ENCODE measurements at regions of chr12 and their contacts with region 1.

Region 1: DNA sequence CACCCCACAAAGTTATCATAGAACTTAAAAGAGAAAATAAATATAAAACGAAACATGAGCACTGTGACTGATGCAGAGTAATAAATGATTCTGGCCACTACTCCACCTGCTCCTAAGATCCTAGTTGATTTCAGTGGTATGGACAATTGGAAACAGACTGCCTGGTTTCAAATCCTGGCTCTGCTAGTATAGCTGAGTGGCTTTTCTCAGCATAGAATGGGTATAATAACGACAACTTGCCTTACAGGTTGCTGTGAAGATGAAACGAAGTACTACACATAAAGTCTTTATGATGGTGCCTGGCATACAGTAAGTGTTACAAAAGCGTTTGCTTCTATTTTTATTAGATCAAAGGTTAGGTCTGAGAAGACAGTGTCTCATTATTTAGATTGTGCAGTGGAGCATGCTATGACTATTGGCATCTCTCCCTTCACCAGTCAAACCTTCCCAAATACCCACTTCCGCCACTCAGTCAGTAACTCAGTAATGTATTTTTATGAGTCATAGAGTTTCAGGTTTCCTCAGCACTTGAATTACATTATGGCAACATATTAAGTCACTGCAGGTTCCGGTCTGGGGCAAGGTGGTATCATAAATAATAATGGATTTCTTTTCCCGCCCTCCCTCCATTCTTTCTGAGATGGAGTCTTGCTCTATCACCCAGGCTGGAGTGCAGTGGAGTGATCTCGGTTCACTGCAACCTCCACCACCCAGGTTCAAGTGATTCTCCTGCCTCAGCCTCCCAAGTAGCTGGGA is 29.7 kb upstream of the NR2C1 start:
- DNase-seq: peak; percentile 70
- H3K4me3 Mint-ChIP-seq: no peak overlapping the region
- H3K27ac Mint-ChIP-seq: no peak overlapping the region
- H3K4me1 Mint-ChIP-seq: peaks cover 10% of the 10 kb centered on the region
- H3K27me3 Mint-ChIP-seq: no peaks in the 10 kb centered on the region

Region 2: DNA sequence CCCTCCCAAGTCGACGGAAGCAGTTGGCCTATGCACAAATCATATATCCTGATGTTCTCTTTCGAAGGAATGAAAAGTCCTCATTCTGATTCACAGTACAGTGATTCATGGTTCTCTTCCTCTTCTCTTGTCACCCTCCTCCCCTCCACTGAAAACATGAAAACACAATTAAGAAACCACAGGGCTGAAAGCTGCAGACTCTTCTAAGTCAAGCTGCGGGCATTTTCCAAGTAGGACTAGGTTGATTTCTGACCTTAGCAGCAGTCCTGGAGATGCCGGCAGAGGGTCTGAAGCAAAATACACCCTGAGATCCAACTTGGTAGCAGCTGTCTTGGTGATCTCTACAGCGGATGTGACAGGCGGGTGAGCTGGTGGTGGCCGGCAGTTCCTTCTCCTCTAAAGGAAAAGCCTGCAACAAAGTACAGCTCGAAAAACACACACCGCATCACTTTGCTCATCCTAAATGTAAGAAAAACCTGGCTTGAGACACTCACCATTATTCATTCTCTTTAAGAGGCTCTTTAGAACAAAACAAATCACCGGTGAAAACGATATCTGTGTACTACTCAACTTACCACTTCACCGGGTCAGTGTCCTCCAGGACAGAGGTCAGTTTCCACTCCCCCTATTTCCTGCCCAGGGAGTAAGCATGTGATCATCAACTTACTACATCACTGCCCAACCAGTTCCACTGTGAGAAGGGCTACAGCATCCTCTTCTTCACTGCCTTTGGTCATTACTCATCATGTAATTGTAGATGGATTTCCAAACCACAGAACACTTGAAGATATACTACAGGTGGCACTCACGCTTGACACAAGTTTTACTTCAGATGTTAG is 458.7 kb before region 1 on chr12:
- CTCF ChIA-PET with region 1: no interaction called
- intact Hi-C with region 1: loop called (anchors 2 kb)
- DNase-seq: peak; percentile 18
- H3K4me3 Mint-ChIP-seq: peak overlapping the region; percentile 8
- H3K27ac Mint-ChIP-seq: no peak overlapping the region
- H3K4me1 Mint-ChIP-seq: peaks cover 27% of the 10 kb centered on the region
- H3K27me3 Mint-ChIP-seq: peaks cover 50% of the 10 kb centered on the region

Region 3: DNA sequence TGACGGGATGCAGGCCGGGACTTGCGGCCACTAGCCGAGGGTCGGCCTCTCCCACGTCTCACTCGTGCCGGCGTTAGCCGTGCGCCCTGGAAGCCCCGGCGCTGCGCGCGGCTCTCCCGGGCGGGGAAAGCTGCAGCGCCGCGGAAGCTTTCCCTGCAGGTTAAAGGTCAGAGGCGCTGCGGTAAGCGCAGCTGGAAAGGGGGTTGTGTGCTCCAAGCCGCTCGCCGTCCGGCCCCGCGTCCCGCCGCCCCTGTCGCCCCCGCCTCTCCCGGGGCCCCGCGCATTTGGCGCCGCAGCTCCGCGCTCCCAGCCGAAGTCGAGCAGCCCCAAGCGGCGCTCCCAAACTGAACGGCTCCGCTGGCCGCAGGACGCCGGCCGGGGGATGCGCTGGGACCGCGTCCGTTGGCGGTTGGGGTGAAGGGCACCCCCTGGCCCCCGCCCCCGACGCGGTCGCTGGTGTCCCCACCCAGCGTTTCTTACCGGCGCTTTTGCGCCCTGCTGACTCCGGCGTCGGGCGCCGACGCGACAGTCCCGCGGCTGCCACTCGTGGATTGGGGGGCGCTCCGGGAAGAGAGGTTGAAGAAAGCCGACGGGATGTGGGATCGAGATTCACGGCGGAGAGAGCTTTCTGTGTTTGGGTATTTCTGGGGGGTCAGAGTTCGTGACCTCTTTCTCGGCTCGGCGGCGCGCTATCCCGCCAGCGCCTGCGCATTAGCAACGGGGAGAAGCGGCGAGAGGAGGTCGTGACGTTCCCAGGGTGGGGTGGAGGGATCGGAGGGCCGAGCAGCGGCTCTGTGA is 30.0 kb before region 1 on chr12 and contains the start of gene NR2C1:
- CTCF ChIA-PET with region 1: interaction called, 3 read pairs
- intact Hi-C with region 1: loop called (anchors 1 kb)
- DNase-seq: peak; percentile 95
- H3K4me3 Mint-ChIP-seq: peak within 1 kb of the TSS; percentile 92
- H3K27ac Mint-ChIP-seq: peak within 1 kb of the TSS; percentile 63
- H3K4me1 Mint-ChIP-seq: peaks cover 19% of the 10 kb centered on the region
- H3K27me3 Mint-ChIP-seq: no peaks in the 10 kb centered on the region
- total RNA-seq, gene NR2C1: 19.8 to 24.6 TPM

Region 4: DNA sequence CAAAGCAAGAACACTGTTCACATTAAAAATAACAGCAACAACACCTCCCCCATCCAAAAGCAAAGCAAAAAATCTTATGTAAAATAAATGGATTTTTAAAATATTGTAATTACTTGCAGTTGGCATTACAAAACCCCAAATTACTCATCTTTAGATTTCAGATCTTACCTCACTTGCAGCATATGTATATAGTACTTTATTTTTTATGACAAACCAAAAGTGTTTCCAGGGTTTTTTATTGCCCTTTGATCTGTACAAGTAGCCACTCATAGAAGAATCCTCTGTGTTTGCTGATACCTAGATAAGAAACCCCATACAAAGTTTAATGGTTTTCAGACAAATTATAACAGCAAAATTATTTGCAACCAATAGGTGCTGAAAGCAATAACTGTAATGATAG is 17.5 kb before region 1 on chr12:
- CTCF ChIA-PET with region 1: no interaction called
- intact Hi-C with region 1: loop called (anchors 1 kb)
- DNase-seq: no peak
- H3K4me3 Mint-ChIP-seq: no peak overlapping the region
- H3K27ac Mint-ChIP-seq: no peak overlapping the region
- H3K4me1 Mint-ChIP-seq: peaks cover 2% of the 10 kb centered on the region
- H3K27me3 Mint-ChIP-seq: no peaks in the 10 kb centered on the region

Region 5: GRCh38 chr12:95117178-95117599 is 14.1 kb after region 1 on chr12:
- CTCF ChIA-PET with region 1: interaction called, 3 read pairs
- intact Hi-C with region 1: loop called (anchors 1 kb)
- DNase-seq: peak; percentile 83
- H3K4me3 Mint-ChIP-seq: no peak overlapping the region
- H3K27ac Mint-ChIP-seq: no peak overlapping the region
- H3K4me1 Mint-ChIP-seq: peaks cover 2% of the 10 kb centered on the region
- H3K27me3 Mint-ChIP-seq: no peaks in the 10 kb centered on the region

Region 6: GRCh38 chr12:95304673-95305198 is 201.6 kb after region 1 on chr12:
- CTCF ChIA-PET with region 1: no interaction called
- intact Hi-C with region 1: loop called (anchors 1 kb)
- DNase-seq: no peak
- H3K4me3 Mint-ChIP-seq: no peak overlapping the region
- H3K27ac Mint-ChIP-seq: no peak overlapping the region
- H3K4me1 Mint-ChIP-seq: peaks cover 13% of the 10 kb centered on the region
- H3K27me3 Mint-ChIP-seq: no peaks in the 10 kb centered on the region

Region 7: DNA sequence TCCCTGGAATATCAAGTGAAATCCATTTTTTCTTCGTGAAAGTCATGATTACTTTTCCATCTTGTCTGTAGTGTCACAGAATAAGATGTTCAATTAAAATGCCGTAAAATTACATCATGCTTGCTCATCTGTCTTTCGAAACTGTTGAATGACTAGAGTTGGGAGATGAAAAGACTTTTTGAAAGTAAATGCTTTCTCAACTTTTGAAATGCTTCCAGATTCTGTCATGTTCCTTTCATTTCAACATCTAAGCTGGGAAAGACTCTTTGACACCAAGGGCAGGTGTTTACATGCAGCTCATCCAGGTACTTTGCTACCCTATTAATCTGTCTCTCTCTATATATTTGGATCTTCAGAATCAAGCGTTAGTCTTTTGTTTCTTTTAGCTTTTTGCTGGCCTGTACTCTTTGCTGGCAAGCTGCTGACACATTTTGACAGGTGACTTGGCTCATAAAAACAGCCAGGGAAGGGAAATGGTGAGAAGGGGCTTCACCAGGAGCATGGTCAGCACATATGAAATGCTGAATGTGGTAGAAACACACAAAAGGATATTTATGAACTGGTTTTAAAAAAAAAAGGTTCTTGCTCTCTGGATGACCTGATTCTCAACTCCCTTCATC is 293.9 kb after region 1 on chr12:
- CTCF ChIA-PET with region 1: no interaction called
- intact Hi-C with region 1: loop called (anchors 1 kb)
- DNase-seq: peak; percentile 21
- H3K4me3 Mint-ChIP-seq: no peak overlapping the region
- H3K27ac Mint-ChIP-seq: peak overlapping the region; percentile 54
- H3K4me1 Mint-ChIP-seq: peaks cover 22% of the 10 kb centered on the region
- H3K27me3 Mint-ChIP-seq: peaks cover 25% of the 10 kb centered on the region